AG04449 (cell line): ENCODE measurements at regions of chr17 and their contacts with region 1.

Region 1: GRCh38 chr17:7351665-7352501 is at the start of gene KCTD11:
- DNase-seq: peak; percentile 62
- H3K4me3 ChIP-seq: peak within 1 kb of the TSS; percentile 96
- CTCF ChIP-seq: peak; percentile 75

Region 2: GRCh38 chr17:7266784-7267183 is 85.1 kb before region 1 on chr17:
- CTCF ChIA-PET with region 1: no interaction called
- POLR2A ChIA-PET with region 1: no interaction called
- DNase-seq: no peak
- H3K4me3 ChIP-seq: no peak overlapping the region
- CTCF ChIP-seq: no peak

Region 3: DNA sequence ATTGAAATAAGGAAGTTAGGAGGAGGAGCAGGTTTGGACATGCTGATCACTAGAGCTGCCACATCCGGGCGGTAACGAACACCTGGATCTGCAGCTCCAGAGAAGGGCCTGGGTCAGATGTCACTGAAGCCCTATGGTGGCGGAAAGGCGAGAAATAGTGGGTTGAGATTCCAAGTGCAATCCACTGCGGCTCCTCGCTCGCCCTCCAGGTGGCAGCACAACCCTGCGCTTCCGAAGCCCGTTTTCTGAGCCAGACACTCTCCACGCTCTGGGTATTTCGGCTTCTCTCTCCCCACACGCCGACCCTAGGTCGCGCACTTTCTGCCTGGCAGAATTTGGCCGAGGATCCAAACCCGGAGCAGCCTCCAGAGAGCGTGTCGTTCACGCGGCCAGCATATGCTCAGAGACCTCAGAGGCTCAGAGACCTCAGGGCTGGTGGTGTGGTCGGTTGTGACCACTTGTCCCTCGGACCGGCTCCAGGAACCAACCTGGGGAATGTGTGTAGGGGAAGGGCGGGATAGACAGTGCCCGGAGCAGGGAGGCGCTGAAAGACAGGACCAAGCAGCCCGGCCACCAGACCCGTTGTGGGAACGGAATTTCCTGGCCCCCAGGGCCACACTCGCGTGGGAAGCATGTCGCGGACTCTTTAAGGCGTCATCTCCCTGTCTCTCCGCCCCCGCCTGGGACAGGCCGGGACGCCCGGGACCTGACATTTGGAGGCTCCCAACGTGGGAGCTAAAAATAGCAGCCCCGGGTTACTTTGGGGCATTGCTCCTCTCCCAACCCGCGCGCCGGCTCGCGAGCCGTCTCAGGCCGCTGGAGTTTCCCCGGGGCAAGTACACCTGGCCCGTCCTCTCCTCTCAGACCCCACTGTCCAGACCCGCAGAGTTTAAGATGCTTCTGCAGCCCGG is 71.1 kb before region 1 on chr17:
- CTCF ChIA-PET with region 1: interaction called, 53 read pairs
- POLR2A ChIA-PET with region 1: interaction called, 3 read pairs
- DNase-seq: no peak
- H3K4me3 ChIP-seq: peak overlapping the region; percentile 52
- CTCF ChIP-seq: peak; percentile 96

Region 4: GRCh38 chr17:7336240-7337175 is 15.4 kb before region 1 on chr17 and contains the start of gene ACAP1:
- CTCF ChIA-PET with region 1: interaction called, 34 read pairs
- POLR2A ChIA-PET with region 1: no interaction called
- DNase-seq: no peak
- H3K4me3 ChIP-seq: no peak within 1 kb of the TSS
- CTCF ChIP-seq: no peak

Region 5: GRCh38 chr17:7374353-7374752 is 22.5 kb after region 1 on chr17:
- CTCF ChIA-PET with region 1: interaction called, 42 read pairs
- POLR2A ChIA-PET with region 1: no interaction called
- DNase-seq: no peak
- H3K4me3 ChIP-seq: no peak overlapping the region
- CTCF ChIP-seq: no peak

Region 6: DNA sequence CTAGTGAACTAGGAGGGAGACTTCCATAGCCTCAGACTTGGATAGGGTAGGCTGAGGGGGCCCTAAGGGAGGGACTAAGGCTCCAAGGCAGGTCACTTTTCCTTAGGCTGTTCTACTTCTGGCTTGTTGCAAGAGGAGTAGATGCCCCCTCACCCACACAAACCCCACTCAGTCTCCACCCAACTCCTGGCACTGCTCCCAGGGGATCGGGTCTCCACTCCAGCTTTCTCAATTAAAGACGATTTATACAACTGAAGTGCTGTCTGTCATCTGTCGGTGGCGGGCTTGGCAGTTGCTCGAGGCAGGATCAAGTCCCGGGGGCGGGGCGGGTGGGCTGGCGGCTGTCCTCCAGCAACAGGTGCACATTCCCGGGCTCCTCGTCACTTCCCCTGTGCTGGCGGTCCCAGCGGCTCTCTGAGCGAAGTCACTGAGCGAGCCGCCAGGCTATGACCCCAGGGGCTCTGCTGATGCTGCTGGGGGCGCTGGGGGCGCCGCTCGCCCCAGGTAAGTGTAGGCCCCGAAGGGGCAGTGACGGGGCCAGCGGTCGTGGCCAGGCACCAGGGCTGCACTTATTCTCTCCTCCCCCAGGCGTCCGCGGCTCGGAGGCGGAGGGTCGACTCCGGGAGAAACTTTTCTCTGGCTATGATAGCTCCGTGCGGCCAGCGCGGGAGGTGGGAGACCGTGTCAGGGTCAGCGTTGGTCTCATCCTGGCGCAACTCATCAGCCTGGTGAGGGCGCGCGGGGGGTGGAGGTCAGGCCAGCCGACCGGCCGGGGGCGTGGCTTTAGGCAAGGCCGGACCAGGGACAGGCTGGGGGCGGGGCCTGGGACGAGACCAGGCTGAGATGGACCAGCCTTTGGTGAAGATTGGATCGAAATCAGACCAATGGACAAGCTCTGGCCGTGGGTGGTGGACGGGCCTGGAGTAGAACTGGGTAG is 93.1 kb after region 1 on chr17 and contains the start of gene CHRNB1:
- CTCF ChIA-PET with region 1: interaction called, 16 read pairs
- POLR2A ChIA-PET with region 1: no interaction called
- DNase-seq: no peak
- H3K4me3 ChIP-seq: peak within 1 kb of the TSS; percentile 36
- CTCF ChIP-seq: no peak